Endothelial cell of umbilical vein (primary cell): ENCODE measurements at regions of chr11 and their contacts with region 1.

Region 1: GRCh38 chr11:46238967-46239800 is 38.3 kb upstream of the CREB3L1 start:
- DNase-seq: peak; percentile 87
- H3K4me3 ChIP-seq: peak overlapping the region; percentile 25 to 64 (median 39)
- H3K27ac ChIP-seq: peak overlapping the region; percentile 86
- H3K4me1 ChIP-seq: peaks cover 30% of the 10 kb centered on the region
- H3K27me3 ChIP-seq: peaks cover 0 to under 1% of the 10 kb centered on the region in 2 experiments
- CTCF ChIP-seq: peak; percentile 98 to 99
- POLR2A ChIP-seq: no peak

Region 2: GRCh38 chr11:45917623-45918330 is 321.4 kb before region 1 on chr11 and contains the start of gene PEX16:
- CTCF ChIA-PET with region 1: no interaction called
- POLR2A ChIA-PET with region 1: no interaction called
- dilution Hi-C with region 1: no loop called
- intact Hi-C with region 1: loop called (anchors 1 kb)
- DNase-seq: peak; percentile 99
- H3K4me3 ChIP-seq: peak within 1 kb of the TSS; percentile 87 to 96 (median 94)
- H3K27ac ChIP-seq: peak within 1 kb of the TSS; percentile 79
- H3K4me1 ChIP-seq: peaks cover 10% of the 10 kb centered on the region
- H3K27me3 ChIP-seq: peaks cover 5 to 15% of the 10 kb centered on the region in 2 experiments
- CTCF ChIP-seq: no peak
- POLR2A ChIP-seq: peak; percentile 95
- total RNA-seq, gene PEX16: 25.7 and 27.4 TPM in 2 replicates

Region 3: DNA sequence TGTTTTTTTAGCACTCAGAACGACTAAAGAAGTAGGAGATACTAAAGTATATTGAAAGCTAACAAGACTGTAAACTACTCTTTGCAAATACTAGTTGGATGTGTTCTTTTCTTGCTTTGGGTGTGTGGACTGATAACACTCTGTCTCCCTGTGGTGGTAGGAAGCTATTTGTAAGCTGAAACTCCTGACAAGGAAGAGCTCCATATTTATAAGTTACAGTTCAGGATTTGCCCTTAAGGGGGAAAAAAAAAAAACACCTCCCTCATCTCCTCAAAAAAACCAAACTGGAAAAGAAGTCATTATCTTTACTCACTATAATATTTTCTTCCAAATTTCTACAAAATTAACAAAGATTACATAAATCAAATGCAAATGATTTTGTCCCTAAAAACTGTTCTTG is 221.8 kb before region 1 on chr11:
- CTCF ChIA-PET with region 1: no interaction called
- POLR2A ChIA-PET with region 1: no interaction called
- dilution Hi-C with region 1: no loop called
- intact Hi-C with region 1: no loop called
- DNase-seq: no peak
- H3K4me3 ChIP-seq: no peak overlapping the region
- H3K27ac ChIP-seq: no peak overlapping the region
- H3K4me1 ChIP-seq: no peaks in the 10 kb centered on the region
- H3K27me3 ChIP-seq: no peaks in the 10 kb centered on the region
- CTCF ChIP-seq: no peak
- POLR2A ChIP-seq: no peak

Region 4: GRCh38 chr11:46106530-46107407 is 132.4 kb before region 1 on chr11:
- CTCF ChIA-PET with region 1: no interaction called
- POLR2A ChIA-PET with region 1: no interaction called
- dilution Hi-C with region 1: no loop called
- intact Hi-C with region 1: no loop called
- DNase-seq: no peak
- H3K4me3 ChIP-seq: no peak overlapping the region
- H3K27ac ChIP-seq: no peak overlapping the region
- H3K4me1 ChIP-seq: peaks cover 5% of the 10 kb centered on the region
- H3K27me3 ChIP-seq: no peaks in the 10 kb centered on the region
- CTCF ChIP-seq: no peak
- POLR2A ChIP-seq: no peak

Region 5: DNA sequence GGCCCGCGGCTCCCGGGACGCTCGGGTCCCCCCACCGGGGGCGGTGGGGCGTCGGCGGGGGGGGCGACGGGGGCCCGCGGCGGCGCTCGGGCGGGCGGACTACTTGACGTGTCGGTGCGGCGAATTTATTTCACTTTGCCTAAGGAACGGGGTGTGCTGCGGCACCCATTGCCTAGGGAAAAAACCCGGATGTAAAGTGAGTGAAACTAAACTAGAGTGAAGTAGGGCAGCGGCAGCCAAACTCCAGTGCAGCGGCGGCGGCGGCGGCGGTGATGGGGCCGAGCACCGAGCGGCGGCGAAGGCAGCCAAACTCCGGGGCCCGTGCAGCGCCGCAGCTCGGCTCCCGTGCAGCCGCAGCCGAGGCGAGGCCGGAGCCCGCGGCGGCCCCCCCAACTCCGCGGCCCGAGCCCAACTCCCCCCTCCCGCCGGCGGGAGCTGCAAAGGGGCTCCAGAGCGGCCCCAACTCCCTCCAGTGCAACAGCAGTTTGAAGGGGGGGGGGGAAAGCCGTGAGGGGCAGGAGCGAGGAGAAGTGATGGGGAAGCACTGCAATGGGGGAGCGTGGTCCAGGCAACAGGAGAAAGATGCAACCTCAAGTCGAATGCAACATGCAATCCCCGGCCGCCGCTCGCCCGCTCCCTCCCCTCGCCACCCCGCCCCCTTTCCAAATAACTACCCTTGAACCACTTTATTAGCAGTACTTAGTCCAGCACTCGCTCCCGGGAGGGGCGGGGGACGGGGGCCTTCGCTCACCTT is 117.3 kb before region 1 on chr11:
- CTCF ChIA-PET with region 1: interaction called, 7 read pairs
- POLR2A ChIA-PET with region 1: interaction called, 4 read pairs
- dilution Hi-C with region 1: no loop called
- intact Hi-C with region 1: loop called (anchors 1 kb)
- DNase-seq: peak; percentile 78
- H3K4me3 ChIP-seq: peak overlapping the region; percentile 87 to 95 (median 92)
- H3K27ac ChIP-seq: peak overlapping the region; percentile 20
- H3K4me1 ChIP-seq: peaks cover 14% of the 10 kb centered on the region
- H3K27me3 ChIP-seq: no peaks in the 10 kb centered on the region
- CTCF ChIP-seq: no peak
- POLR2A ChIP-seq: peak; percentile 20

Region 6: DNA sequence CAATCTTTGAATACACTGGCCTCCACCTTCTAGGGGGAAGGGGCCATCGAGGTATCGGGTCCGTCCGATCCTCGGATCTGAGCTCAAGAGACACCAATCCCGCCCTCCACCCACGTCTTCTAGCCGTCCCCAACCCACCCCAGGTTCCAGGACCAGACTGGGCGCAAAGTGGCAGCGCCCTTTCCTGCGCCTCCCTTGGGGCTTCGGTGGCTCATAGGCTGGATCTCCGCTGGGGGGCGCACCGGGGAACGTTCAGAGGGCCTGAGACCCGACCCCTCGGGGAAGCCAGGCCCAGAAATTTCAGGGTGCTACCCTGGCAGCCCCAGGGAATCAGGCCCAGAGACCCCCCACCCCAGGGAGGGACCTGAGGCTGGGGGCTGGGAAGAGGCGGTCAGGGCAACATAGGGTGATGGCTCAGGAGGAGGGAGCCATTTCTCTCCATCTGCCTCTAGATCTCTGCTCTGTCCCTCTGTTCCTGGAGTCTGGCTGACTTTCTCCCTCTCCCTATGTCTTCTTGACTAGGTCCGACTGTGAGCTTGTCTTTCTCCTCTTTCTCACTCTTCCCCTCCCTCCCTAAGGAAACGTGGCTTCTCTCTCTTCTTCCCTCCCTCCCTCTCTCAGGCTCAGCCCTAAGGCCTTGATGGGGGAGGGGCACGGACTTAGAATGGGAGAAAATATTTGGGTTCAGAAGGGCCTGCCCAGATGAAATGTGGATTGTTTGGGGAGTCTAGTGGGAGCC is 39.4 kb after region 1 on chr11:
- CTCF ChIA-PET with region 1: interaction called, 10 read pairs
- POLR2A ChIA-PET with region 1: interaction called, 3 read pairs
- dilution Hi-C with region 1: no loop called
- intact Hi-C with region 1: no loop called
- DNase-seq: no peak
- H3K4me3 ChIP-seq: peak overlapping the region in 1 of 3 experiments; percentile 33
- H3K27ac ChIP-seq: no peak overlapping the region
- H3K4me1 ChIP-seq: peaks cover 8% of the 10 kb centered on the region
- H3K27me3 ChIP-seq: peaks cover 36 to 42% of the 10 kb centered on the region in 2 experiments
- CTCF ChIP-seq: peak in 1 of 2 donors; percentile 49
- POLR2A ChIP-seq: no peak

Region 7: GRCh38 chr11:46308631-46309419 is 69.6 kb after region 1 on chr11:
- CTCF ChIA-PET with region 1: interaction called, 367 read pairs
- POLR2A ChIA-PET with region 1: no interaction called
- dilution Hi-C with region 1: no loop called
- intact Hi-C with region 1: loop called (anchors 1 kb)
- DNase-seq: peak; percentile 60
- H3K4me3 ChIP-seq: no peak overlapping the region
- H3K27ac ChIP-seq: no peak overlapping the region
- H3K4me1 ChIP-seq: no peaks in the 10 kb centered on the region
- H3K27me3 ChIP-seq: no peaks in the 10 kb centered on the region
- CTCF ChIP-seq: peak; percentile 92 to 93
- POLR2A ChIP-seq: no peak

Region 8: GRCh38 chr11:46346886-46347636 is 107.9 kb after region 1 on chr11 and contains the start of gene DGKZ:
- CTCF ChIA-PET with region 1: interaction called, 19 read pairs
- POLR2A ChIA-PET with region 1: interaction called, 3 read pairs
- dilution Hi-C with region 1: no loop called
- intact Hi-C with region 1: no loop called
- DNase-seq: peak; percentile 84
- H3K4me3 ChIP-seq: peak within 1 kb of the TSS; percentile 32 to 73 (median 61)
- H3K27ac ChIP-seq: peak within 1 kb of the TSS; percentile 19
- H3K4me1 ChIP-seq: peaks cover 40% of the 10 kb centered on the region
- H3K27me3 ChIP-seq: no peaks in the 10 kb centered on the region
- CTCF ChIP-seq: peak; percentile 61 to 90
- POLR2A ChIP-seq: peak; percentile 56
- total RNA-seq, gene DGKZ: 87.1 and 88.8 TPM in 2 replicates

Region 9: GRCh38 chr11:46367244-46367915 is 128.2 kb after region 1 on chr11:
- CTCF ChIA-PET with region 1: interaction called, 3 read pairs
- POLR2A ChIA-PET with region 1: no interaction called
- dilution Hi-C with region 1: no loop called
- intact Hi-C with region 1: loop called (anchors 1 kb)
- DNase-seq: peak; percentile 43
- H3K4me3 ChIP-seq: no peak overlapping the region
- H3K27ac ChIP-seq: no peak overlapping the region
- H3K4me1 ChIP-seq: peaks cover 18% of the 10 kb centered on the region
- H3K27me3 ChIP-seq: no peaks in the 10 kb centered on the region
- CTCF ChIP-seq: peak; percentile 77 to 93
- POLR2A ChIP-seq: no peak